ENCODE measurements at regions of chr2 and their contacts with region 1.

Region 1: GRCh38 chr2:52520644-52521043 is 1247.0 kb upstream of the CHAC2 start:
- DNase-seq: no peak
- H3K4me3 ChIP-seq: no peak overlapping the region
- H3K27ac ChIP-seq: no peak overlapping the region
- H3K4me1 ChIP-seq: no peaks in the 10 kb centered on the region
- H3K27me3 ChIP-seq: no peaks in the 10 kb centered on the region
- CTCF ChIP-seq: no peak
- POLR2A ChIP-seq: no peak

Region 2: GRCh38 chr2:52428224-52428623 is 92.4 kb before region 1 on chr2:
- intact Hi-C with region 1: no loop called
- DNase-seq: no peak
- H3K4me3 ChIP-seq: no peak overlapping the region
- H3K27ac ChIP-seq: no peak overlapping the region
- H3K4me1 ChIP-seq: no peaks in the 10 kb centered on the region
- H3K27me3 ChIP-seq: no peaks in the 10 kb centered on the region
- CTCF ChIP-seq: no peak
- POLR2A ChIP-seq: no peak

Region 3: DNA sequence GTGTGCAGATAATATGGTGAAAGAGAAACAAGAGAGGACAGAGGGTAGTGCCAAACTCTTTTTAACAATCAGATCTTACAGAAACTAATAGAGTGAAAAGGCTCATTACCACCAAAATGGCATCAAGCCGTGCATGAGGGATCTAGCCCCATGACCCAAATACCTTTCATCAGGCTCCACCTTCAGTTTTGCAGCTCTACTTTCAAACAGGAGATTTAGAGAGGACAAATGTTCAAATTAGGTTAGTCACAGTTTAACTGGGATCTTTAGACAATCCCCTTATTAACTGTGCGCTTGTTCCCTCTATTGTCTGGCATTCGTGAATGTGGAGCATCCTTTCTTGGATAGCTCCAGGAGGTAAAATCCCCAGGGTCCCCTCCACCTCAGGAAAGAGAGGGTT is 37.6 kb after region 1 on chr2:
- intact Hi-C with region 1: loop called (anchors 2 kb)
- DNase-seq: no peak
- H3K4me3 ChIP-seq: no peak overlapping the region
- H3K27ac ChIP-seq: no peak overlapping the region
- H3K4me1 ChIP-seq: no peaks in the 10 kb centered on the region
- H3K27me3 ChIP-seq: no peaks in the 10 kb centered on the region
- CTCF ChIP-seq: no peak
- POLR2A ChIP-seq: no peak

Measured in spleen (tissue), 13 donors.